ENCODE measurements at regions of chr20 and their contacts with region 1.

Region 1: GRCh38 chr20:22586645-22587310 is 2.4 kb upstream of the FOXA2 start:
- DNase-seq: peak; percentile 59
- ATAC-seq: no peak
- H3K4me3 Mint-ChIP-seq: no peak overlapping the region
- H3K27ac Mint-ChIP-seq: no peak overlapping the region
- H3K4me1 Mint-ChIP-seq: no peaks in the 10 kb centered on the region
- H3K27me3 Mint-ChIP-seq: peaks cover 59% of the 10 kb centered on the region

Region 2: GRCh38 chr20:21702553-21703470 is 884.0 kb before region 1 on chr20:
- CTCF ChIA-PET with region 1: no interaction called
- POLR2A ChIA-PET with region 1: no interaction called
- intact Hi-C with region 1: loop called in 1 of 2 experiments (anchors 5 kb)
- DNase-seq: peak; percentile 80
- ATAC-seq: peak; percentile 55
- H3K4me3 Mint-ChIP-seq: no peak overlapping the region
- H3K27ac Mint-ChIP-seq: no peak overlapping the region
- H3K4me1 Mint-ChIP-seq: no peaks in the 10 kb centered on the region
- H3K27me3 Mint-ChIP-seq: peaks cover 78% of the 10 kb centered on the region

Region 3: GRCh38 chr20:22339091-22339881 is 247.5 kb before region 1 on chr20:
- CTCF ChIA-PET with region 1: interaction called, 11 read pairs
- POLR2A ChIA-PET with region 1: no interaction called
- intact Hi-C with region 1: loop called (anchors 1 to 2 kb)
- DNase-seq: peak; percentile 65
- ATAC-seq: peak; percentile 47
- H3K4me3 Mint-ChIP-seq: no peak overlapping the region
- H3K27ac Mint-ChIP-seq: no peak overlapping the region
- H3K4me1 Mint-ChIP-seq: peaks cover 2% of the 10 kb centered on the region
- H3K27me3 Mint-ChIP-seq: peaks cover 3% of the 10 kb centered on the region

Region 4: GRCh38 chr20:22567944-22568871 is 18.6 kb before region 1 on chr20:
- CTCF ChIA-PET with region 1: interaction called, 3 read pairs
- POLR2A ChIA-PET with region 1: no interaction called
- intact Hi-C with region 1: loop called in 1 of 2 experiments (anchors 2 kb)
- DNase-seq: no peak
- ATAC-seq: no peak
- H3K4me3 Mint-ChIP-seq: no peak overlapping the region
- H3K27ac Mint-ChIP-seq: no peak overlapping the region
- H3K4me1 Mint-ChIP-seq: no peaks in the 10 kb centered on the region
- H3K27me3 Mint-ChIP-seq: peaks cover 65% of the 10 kb centered on the region

Region 5: GRCh38 chr20:22611636-22612035 is 24.9 kb after region 1 on chr20:
- CTCF ChIA-PET with region 1: no interaction called
- POLR2A ChIA-PET with region 1: no interaction called
- intact Hi-C with region 1: no loop called
- DNase-seq: no peak
- ATAC-seq: no peak
- H3K4me3 Mint-ChIP-seq: no peak overlapping the region
- H3K27ac Mint-ChIP-seq: no peak overlapping the region
- H3K4me1 Mint-ChIP-seq: no peaks in the 10 kb centered on the region
- H3K27me3 Mint-ChIP-seq: peaks cover 2% of the 10 kb centered on the region